Natural killer cell (primary cell): ENCODE measurements at regions of chr12 and their contacts with region 1.

Region 1: DNA sequence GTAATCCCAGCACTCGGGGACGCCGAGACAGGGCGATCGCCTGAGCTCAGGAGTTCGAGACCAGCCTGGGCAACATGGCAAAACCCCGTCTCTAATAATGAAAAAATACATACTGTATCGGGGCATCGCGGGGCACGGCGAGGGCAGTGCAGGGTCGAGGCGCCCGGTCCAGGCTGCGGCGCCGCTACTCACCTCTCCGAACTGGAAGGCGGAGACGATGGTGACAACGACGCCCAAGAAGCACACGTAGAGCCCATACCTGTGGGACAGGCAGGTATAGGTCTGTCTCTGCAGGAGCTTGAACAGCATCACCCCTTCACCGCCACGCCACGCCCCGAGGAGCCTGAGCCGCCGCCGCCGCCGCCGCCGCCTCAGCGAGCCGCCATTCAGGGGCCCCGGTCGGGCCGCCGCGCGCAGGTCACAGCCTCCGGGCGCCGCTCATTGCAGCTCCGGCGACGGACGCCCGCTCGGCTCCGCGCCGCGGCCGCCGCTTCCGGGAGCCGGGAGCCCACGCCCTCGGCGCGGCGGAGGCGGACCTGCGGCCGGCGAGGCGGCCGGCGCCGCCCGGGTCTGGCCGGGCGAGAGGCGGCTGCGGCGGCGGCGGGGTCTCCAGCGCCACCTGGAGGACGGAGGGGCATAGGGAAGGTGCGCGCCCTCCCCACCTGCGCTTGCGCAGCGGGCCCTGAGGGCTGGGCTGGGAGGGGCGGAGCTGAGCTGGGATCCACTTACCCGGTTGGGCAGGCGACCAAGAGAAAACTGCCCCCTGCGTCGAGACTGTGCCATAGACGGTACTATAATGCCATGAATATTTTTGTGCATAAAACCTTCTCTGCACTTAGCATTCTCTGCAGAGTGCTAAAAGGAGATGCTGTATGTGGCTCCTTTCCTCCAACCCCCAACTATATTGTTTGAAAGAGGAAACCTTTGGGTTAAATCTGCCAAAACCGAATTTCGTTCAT is at the start of gene GNPTAB:
- DNase-seq: peak; percentile 97 to 98
- ATAC-seq: peak; percentile 90 to 98 (median 90)
- H3K4me3 ChIP-seq: peak within 1 kb of the TSS; percentile 79
- H3K4me3 Mint-ChIP-seq: peak within 1 kb of the TSS; percentile 99
- H3K27ac ChIP-seq: peak within 1 kb of the TSS; percentile 68
- H3K27ac Mint-ChIP-seq: peak within 1 kb of the TSS; percentile 84 to 90
- H3K4me1 ChIP-seq: peaks cover 32% of the 10 kb centered on the region
- H3K4me1 Mint-ChIP-seq: peaks cover 53 to 56% of the 10 kb centered on the region in 2 donors
- H3K27me3 ChIP-seq: no peaks in the 10 kb centered on the region
- H3K27me3 Mint-ChIP-seq: no peaks in the 10 kb centered on the region
- CTCF ChIP-seq: peak; percentile 61
- total RNA-seq, gene GNPTAB: 260 to 285 (median 262) TPM

Region 2: DNA sequence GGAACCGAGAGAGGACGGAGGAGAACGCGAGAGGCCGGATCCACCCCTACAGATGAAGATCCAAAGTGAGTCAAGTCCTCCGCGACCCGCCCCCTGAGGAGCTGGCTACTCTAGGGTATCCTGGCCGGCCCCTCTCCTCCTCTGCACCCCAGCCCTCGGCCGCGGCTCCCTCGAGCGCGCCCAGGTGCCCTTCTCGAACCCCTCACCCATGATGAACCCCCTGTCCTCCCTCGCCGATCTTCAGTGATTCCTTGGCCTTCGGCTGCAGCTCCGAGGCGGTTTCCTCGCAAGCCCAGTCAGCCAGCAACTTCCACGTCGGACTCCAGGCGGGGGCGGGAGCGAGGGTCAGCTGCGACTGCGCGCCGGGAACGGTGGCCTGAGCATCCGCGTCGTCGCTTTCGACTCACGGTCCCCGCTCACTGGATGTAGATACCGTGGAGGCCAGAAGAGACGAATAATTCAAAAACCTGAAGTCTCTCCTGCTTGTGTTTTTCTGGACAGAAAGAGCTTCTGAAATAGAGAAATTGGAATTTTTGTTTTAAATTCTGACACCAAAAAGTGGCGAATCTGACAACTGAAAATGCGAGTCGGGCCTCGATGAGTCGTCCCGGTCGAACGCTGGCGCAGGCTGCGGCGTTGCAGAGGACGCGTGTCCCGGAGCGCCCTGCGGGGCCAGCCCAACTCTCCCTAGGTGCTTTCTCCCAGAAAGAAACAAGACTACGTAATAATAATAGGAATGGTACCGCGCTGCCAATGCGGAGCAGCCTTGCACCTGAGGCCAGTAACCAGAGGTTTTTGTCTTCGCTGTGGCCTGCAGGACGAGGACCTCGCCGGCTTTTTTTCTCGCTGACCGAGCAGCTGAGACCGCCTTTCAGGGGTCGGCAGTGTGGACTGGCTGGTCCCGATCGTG is 423.0 kb before region 1 on chr12 and contains the start of gene ARL1:
- intact Hi-C with region 1: loop called (anchors 5 kb)
- DNase-seq: peak; percentile 73 to 87
- ATAC-seq: peak; percentile 86 to 89 (median 87)
- H3K4me3 ChIP-seq: peak within 1 kb of the TSS; percentile 78
- H3K4me3 Mint-ChIP-seq: peak within 1 kb of the TSS; percentile 98
- H3K27ac ChIP-seq: peak within 1 kb of the TSS; percentile 95
- H3K27ac Mint-ChIP-seq: peak within 1 kb of the TSS; percentile 93 to 95
- H3K4me1 ChIP-seq: peaks cover 18% of the 10 kb centered on the region
- H3K4me1 Mint-ChIP-seq: peaks cover 25 to 32% of the 10 kb centered on the region in 2 donors
- H3K27me3 ChIP-seq: peaks cover 2% of the 10 kb centered on the region
- H3K27me3 Mint-ChIP-seq: peaks cover 2 to 7% of the 10 kb centered on the region in 2 donors
- CTCF ChIP-seq: no peak
- total RNA-seq, gene ARL1: 32.0 to 32.6 (median 32.2) TPM

Region 3: DNA sequence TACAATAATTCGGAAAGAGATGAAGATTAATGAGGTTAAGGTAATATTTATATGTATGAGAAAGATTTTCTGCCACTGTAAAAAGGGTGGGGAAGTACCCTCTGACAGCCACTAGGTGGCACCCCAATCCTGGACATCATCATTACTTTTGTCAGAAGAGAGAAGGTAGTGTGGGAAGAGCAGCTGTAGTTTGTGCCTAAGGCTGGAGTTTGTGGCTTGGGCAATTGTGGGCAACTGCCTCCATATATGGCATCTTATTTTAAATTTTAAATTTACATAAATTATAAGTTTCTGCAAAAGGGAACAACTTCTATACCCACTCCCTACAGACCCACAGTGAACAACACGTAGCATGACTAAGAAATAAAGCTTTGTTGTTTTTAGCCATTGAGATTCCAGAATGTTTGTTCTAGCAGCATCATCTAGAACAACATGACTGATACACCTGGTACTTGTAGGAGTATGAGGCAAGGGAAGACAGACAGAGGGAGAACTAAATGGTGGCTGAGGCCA is 56.9 kb before region 1 on chr12:
- intact Hi-C with region 1: loop called (anchors 2 kb)
- DNase-seq: peak; percentile 58 to 88
- ATAC-seq: peak; percentile 92 to 98 (median 95)
- H3K4me3 ChIP-seq: no peak overlapping the region
- H3K4me3 Mint-ChIP-seq: no peak overlapping the region
- H3K27ac ChIP-seq: no peak overlapping the region
- H3K27ac Mint-ChIP-seq: peak overlapping the region; percentile 42 to 76
- H3K4me1 ChIP-seq: peaks cover 8% of the 10 kb centered on the region
- H3K4me1 Mint-ChIP-seq: peaks cover 17 to 42% of the 10 kb centered on the region in 2 donors
- H3K27me3 ChIP-seq: no peaks in the 10 kb centered on the region
- H3K27me3 Mint-ChIP-seq: no peaks in the 10 kb centered on the region
- CTCF ChIP-seq: peak; percentile 95

Region 4: DNA sequence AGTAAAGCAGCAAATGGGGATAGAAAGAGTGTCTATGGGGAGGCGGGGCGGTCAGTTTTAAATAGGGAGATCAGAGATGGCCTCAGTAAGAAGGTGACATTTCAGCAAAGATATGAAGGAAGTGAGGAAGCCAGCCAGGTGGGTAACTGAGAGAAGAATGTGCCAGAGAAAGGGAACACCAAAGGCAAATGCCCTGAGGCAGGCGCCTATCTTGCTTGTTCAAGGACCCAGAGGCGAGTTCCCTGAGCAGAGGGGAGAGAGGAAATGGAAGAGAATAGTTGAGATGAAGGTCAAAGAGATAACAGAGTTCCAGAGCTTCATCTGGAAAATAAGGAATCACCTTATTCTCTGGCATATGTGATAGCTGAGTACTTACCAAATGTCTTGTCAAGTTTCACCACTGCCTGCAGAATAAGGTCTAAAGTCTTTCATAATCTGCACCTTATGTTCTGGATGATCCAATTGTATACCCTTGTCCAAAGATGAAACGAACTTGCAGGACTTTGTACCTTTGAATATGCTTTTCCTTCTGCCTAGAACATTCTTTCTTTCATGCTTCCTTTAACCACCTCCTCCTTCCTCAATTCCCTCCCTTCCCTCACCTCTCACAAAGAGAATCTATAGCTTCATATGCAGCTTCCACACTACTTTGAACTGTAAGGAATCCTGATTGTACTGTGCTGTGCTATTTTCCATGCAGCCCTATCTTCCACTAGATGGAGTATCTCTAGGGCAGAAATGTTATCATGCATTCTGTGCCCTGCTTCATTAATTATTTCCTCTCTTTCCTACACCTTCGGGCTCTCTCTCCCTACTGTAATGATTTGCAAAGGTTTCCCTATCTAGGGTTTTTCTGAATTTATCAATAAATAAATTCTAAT is 38.4 kb before region 1 on chr12:
- intact Hi-C with region 1: loop called (anchors 2 kb)
- DNase-seq: peak in 1 of 2 donors; percentile 35
- ATAC-seq: peak in 2 of 3 donors; percentile 9 to 38
- H3K4me3 ChIP-seq: no peak overlapping the region
- H3K4me3 Mint-ChIP-seq: peak overlapping the region; percentile 82
- H3K27ac ChIP-seq: peak overlapping the region; percentile 63
- H3K27ac Mint-ChIP-seq: peak overlapping the region; percentile 90 to 91
- H3K4me1 ChIP-seq: peaks cover 53% of the 10 kb centered on the region
- H3K4me1 Mint-ChIP-seq: peaks cover 60 to 62% of the 10 kb centered on the region in 2 donors
- H3K27me3 ChIP-seq: no peaks in the 10 kb centered on the region
- H3K27me3 Mint-ChIP-seq: no peaks in the 10 kb centered on the region
- CTCF ChIP-seq: peak; percentile 12

Region 5: GRCh38 chr12:101819467-101819866 is 11.2 kb before region 1 on chr12:
- intact Hi-C with region 1: no loop called
- DNase-seq: no peak
- ATAC-seq: peak in 1 of 3 donors; percentile 33
- H3K4me3 ChIP-seq: no peak overlapping the region
- H3K4me3 Mint-ChIP-seq: no peak overlapping the region
- H3K27ac ChIP-seq: no peak overlapping the region
- H3K27ac Mint-ChIP-seq: peak overlapping the region; percentile 84 to 90
- H3K4me1 ChIP-seq: peaks cover 48% of the 10 kb centered on the region
- H3K4me1 Mint-ChIP-seq: peaks cover 76 to 81% of the 10 kb centered on the region in 2 donors
- H3K27me3 ChIP-seq: no peaks in the 10 kb centered on the region
- H3K27me3 Mint-ChIP-seq: no peaks in the 10 kb centered on the region
- CTCF ChIP-seq: no peak

Region 6: DNA sequence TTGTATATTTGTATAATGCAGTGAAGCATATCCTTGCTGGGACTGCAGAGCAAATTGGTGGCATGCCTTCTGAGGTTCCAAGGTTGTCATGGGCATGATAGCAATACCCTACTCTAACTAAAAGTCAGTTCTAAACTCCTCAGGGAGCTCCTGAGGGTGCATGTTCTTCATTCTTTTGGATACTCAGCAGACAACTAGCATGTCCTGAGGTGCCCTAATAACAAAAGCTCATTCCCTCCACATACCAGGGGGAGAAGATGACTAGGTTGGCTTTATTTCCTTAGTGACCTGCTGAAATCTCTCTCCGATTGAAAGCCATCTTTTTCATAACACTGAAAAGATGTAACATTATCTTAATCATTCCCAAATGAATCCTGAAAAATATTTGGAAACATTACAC is 838.4 kb after region 1 on chr12:
- intact Hi-C with region 1: no loop called
- DNase-seq: no peak
- ATAC-seq: no peak
- H3K4me3 ChIP-seq: no peak overlapping the region
- H3K4me3 Mint-ChIP-seq: no peak overlapping the region
- H3K27ac ChIP-seq: no peak overlapping the region
- H3K27ac Mint-ChIP-seq: no peak overlapping the region
- H3K4me1 ChIP-seq: no peaks in the 10 kb centered on the region
- H3K4me1 Mint-ChIP-seq: no peaks in the 10 kb centered on the region
- H3K27me3 ChIP-seq: no peaks in the 10 kb centered on the region
- H3K27me3 Mint-ChIP-seq: peaks cover 0 to 4% of the 10 kb centered on the region in 2 donors
- CTCF ChIP-seq: no peak